GM12878 (cell line): ENCODE measurements at regions of chr11 and their contacts with region 1.

Region 1: GRCh38 chr11:62309991-62310390 is 11.1 kb upstream of the SCGB1D4 start:
- DNase-seq: no peak
- ATAC-seq: no peak
- H3K4me3 ChIP-seq: no peak overlapping the region
- H3K27ac ChIP-seq: no peak overlapping the region
- H3K4me1 ChIP-seq: no peaks in the 10 kb centered on the region
- H3K27me3 ChIP-seq: peaks cover 0 to 2% of the 10 kb centered on the region in 2 experiments; a peak in 3 of 4 replicates
- CTCF ChIP-seq: no peak
- EP300 ChIP-seq: no peak
- POLR2A ChIP-seq: no peak
- RAD21 ChIP-seq: no peak

Region 2: DNA sequence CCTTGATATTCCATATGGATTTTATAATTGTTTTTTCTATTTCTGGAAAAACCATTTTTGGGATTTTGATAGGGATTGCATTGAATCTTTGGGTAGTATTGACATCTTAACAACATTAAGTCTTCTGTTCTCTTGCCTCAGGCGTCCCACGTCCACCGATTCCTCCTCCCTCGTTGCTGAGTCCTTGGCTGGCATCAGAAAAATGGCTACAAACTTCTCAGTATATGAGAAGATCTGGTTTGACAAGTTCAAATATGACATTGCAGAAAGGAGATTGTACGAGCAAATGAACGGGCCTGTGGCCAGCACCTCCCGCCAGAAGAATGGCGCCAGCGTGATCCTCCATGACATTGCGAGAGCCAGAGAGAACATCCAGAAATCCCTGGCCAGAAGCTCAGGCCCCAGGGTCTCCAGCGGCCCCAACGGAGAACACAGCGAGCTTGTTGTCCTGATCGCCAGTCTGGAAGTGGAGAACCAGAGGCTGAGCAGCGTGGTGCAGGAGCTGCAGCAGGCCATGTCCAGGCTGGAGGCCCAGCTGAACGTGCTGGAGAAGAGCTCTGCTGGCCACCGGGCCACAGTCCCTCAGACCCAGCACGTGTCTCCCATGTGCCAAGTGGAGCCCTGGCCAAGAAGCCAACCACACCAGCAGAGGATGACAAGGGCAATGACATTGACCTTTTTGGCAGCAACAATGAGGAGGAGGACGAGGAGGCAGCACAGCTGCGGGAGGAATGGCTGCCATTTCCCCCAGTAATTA is 140.7 kb before region 1 on chr11:
- CTCF ChIA-PET with region 1: interaction called, 12 read pairs
- POLR2A ChIA-PET with region 1: no interaction called
- RAD21 ChIA-PET with region 1: interaction called, 6 read pairs
- SMC1A ChIA-PET with region 1: interaction called, 5 read pairs
- in situ Hi-C with region 1: loop called (anchors 5 kb)
- intact Hi-C with region 1: loop called (anchors 1 kb)
- DNase-seq: no peak
- ATAC-seq: no peak
- H3K4me3 ChIP-seq: no peak overlapping the region
- H3K27ac ChIP-seq: no peak overlapping the region
- H3K4me1 ChIP-seq: no peaks in the 10 kb centered on the region
- H3K27me3 ChIP-seq: peaks cover 0 to 2% of the 10 kb centered on the region in 2 experiments; a peak in 1 of 4 replicates
- CTCF ChIP-seq: no peak
- EP300 ChIP-seq: no peak
- POLR2A ChIP-seq: no peak
- RAD21 ChIP-seq: no peak

Region 3: GRCh38 chr11:62217191-62217748 is 92.7 kb before region 1 on chr11:
- CTCF ChIA-PET with region 1: interaction called, 11 read pairs
- POLR2A ChIA-PET with region 1: no interaction called
- RAD21 ChIA-PET with region 1: interaction called, 4 read pairs
- SMC1A ChIA-PET with region 1: interaction called, 4 read pairs
- in situ Hi-C with region 1: loop called (anchors 5 kb)
- intact Hi-C with region 1: loop called (anchors 2 kb)
- DNase-seq: no peak
- ATAC-seq: no peak
- H3K4me3 ChIP-seq: no peak overlapping the region
- H3K27ac ChIP-seq: no peak overlapping the region
- H3K4me1 ChIP-seq: no peaks in the 10 kb centered on the region
- H3K27me3 ChIP-seq: no peaks in the 10 kb centered on the region; a peak in 1 of 4 replicates
- CTCF ChIP-seq: peak; percentile 38 to 47 (median 45); a peak in 5 of 6 replicates
- EP300 ChIP-seq: no peak
- POLR2A ChIP-seq: no peak
- RAD21 ChIP-seq: peak; percentile 51

Region 4: GRCh38 chr11:62233730-62234129 is 76.3 kb before region 1 on chr11:
- CTCF ChIA-PET with region 1: interaction called, 4 read pairs
- POLR2A ChIA-PET with region 1: no interaction called
- RAD21 ChIA-PET with region 1: no interaction called
- SMC1A ChIA-PET with region 1: interaction called, 4 read pairs
- in situ Hi-C with region 1: no loop called
- intact Hi-C with region 1: loop called (anchors 5 kb)
- DNase-seq: no peak
- ATAC-seq: no peak
- H3K4me3 ChIP-seq: no peak overlapping the region
- H3K27ac ChIP-seq: no peak overlapping the region
- H3K4me1 ChIP-seq: no peaks in the 10 kb centered on the region
- H3K27me3 ChIP-seq: no peaks in the 10 kb centered on the region; a peak in 2 of 4 replicates
- CTCF ChIP-seq: peak in 2 of 3 experiments; percentile 11 to 25; a peak in 2 of 6 replicates
- EP300 ChIP-seq: no peak
- POLR2A ChIP-seq: no peak
- RAD21 ChIP-seq: no peak; the same call in 1 of the 2 replicates

Region 5: GRCh38 chr11:62245271-62245753 is 64.7 kb before region 1 on chr11:
- CTCF ChIA-PET with region 1: interaction called, 4 read pairs
- POLR2A ChIA-PET with region 1: no interaction called
- RAD21 ChIA-PET with region 1: interaction called, 11 read pairs
- SMC1A ChIA-PET with region 1: interaction called, 4 read pairs
- in situ Hi-C with region 1: no loop called
- intact Hi-C with region 1: loop called (anchors 1 kb)
- DNase-seq: no peak
- ATAC-seq: peak; percentile 82
- H3K4me3 ChIP-seq: no peak overlapping the region
- H3K27ac ChIP-seq: no peak overlapping the region
- H3K4me1 ChIP-seq: no peaks in the 10 kb centered on the region
- H3K27me3 ChIP-seq: no peaks in the 10 kb centered on the region; a peak in 2 of 4 replicates
- CTCF ChIP-seq: peak; percentile 38 to 42 (median 38); a peak in 5 of 6 replicates
- EP300 ChIP-seq: no peak
- POLR2A ChIP-seq: no peak
- RAD21 ChIP-seq: peak; percentile 44; the same call in 1 of the 2 replicates

Region 6: GRCh38 chr11:62324738-62325556 is 15.0 kb after region 1 on chr11:
- CTCF ChIA-PET with region 1: interaction called, 14 read pairs
- POLR2A ChIA-PET with region 1: no interaction called
- RAD21 ChIA-PET with region 1: no interaction called
- SMC1A ChIA-PET with region 1: interaction called, 4 read pairs
- in situ Hi-C with region 1: no loop called
- intact Hi-C with region 1: no loop called
- DNase-seq: no peak
- ATAC-seq: peak; percentile 94
- H3K4me3 ChIP-seq: no peak overlapping the region
- H3K27ac ChIP-seq: no peak overlapping the region
- H3K4me1 ChIP-seq: no peaks in the 10 kb centered on the region
- H3K27me3 ChIP-seq: no peaks in the 10 kb centered on the region; a peak in 2 of 4 replicates
- CTCF ChIP-seq: peak; percentile 69 to 75 (median 72)
- EP300 ChIP-seq: no peak
- POLR2A ChIP-seq: no peak
- RAD21 ChIP-seq: peak; percentile 57